ENCODE measurements at regions of chr4 and their contacts with region 1.

Region 1: DNA sequence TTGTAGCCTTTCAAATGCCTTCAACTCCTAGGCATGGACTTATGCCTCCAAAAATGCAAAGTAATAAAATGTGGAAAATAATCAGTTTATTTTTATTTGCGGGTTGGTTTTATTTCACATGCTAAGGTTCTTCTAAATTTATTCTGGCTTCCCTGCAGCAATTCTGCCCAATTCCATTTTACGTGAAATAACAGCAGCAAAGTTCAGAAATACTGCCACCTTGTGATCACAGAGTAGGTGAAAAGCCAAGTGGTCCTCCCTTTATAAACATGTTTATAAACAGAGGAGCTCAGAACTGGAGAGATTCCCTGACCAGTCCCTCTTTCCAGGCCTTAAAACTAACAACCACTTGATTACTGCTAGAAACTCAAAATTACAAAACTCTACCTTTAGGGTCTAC is 14.7 kb upstream of the DCHS2 start:
- DNase-seq: peak; percentile 13
- H3K4me3 ChIP-seq: no peak overlapping the region
- H3K27ac ChIP-seq: no peak overlapping the region
- H3K4me1 ChIP-seq: no peaks in the 10 kb centered on the region
- H3K27me3 ChIP-seq: no peaks in the 10 kb centered on the region
- CTCF ChIP-seq: peak in 3 of 4 experiments; percentile 34 to 57 (median 35)
- POLR2A ChIP-seq: no peak

Region 2: DNA sequence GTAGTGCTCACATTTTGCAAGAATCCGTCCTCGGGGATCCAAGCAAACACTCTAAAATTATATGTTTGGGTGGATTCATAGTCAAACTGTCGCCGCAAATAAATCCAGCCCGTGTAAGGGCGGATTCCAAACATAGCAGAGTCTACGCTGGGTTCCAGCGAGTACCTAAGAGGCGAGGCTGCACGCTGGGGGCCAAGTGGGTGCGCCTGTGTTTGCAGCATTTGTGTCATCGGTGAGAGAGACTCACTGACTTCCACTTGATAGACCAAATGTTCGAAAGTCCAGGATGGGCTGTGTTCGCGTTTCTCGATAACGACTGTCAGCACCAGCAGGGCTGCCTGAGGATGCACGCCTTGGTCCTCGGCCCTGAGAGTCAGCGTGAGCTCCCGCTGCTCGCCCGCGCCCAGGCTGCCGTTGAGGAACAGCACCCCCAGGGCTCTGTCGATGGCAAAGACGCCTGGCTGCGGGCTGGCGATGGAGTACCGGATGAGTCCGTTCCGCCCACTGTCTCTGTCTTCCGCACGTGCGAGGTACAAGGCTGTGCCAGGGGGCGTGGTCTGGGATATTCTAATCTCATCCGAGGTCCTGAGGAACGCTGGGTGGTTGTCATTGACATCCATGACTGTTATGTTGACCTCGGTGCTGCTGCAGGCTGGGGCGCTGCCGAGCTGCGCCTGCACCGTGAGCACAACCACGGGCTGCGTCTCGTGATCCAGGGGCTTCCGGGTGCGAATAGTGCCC is 173.4 kb before region 1 on chr4:
- intact Hi-C with region 1: loop called (anchors 5 kb)
- DNase-seq: no peak
- H3K4me3 ChIP-seq: no peak overlapping the region
- H3K27ac ChIP-seq: no peak overlapping the region
- H3K4me1 ChIP-seq: no peaks in the 10 kb centered on the region
- H3K27me3 ChIP-seq: no peaks in the 10 kb centered on the region
- CTCF ChIP-seq: no peak
- POLR2A ChIP-seq: no peak

Region 3: GRCh38 chr4:154399259-154399974 is 106.8 kb before region 1 on chr4:
- intact Hi-C with region 1: loop called (anchors 2 kb)
- DNase-seq: no peak
- H3K4me3 ChIP-seq: no peak overlapping the region
- H3K27ac ChIP-seq: no peak overlapping the region
- H3K4me1 ChIP-seq: no peaks in the 10 kb centered on the region
- H3K27me3 ChIP-seq: no peaks in the 10 kb centered on the region
- CTCF ChIP-seq: peak in 2 of 4 experiments; percentile 41 to 60
- POLR2A ChIP-seq: no peak

Region 4: DNA sequence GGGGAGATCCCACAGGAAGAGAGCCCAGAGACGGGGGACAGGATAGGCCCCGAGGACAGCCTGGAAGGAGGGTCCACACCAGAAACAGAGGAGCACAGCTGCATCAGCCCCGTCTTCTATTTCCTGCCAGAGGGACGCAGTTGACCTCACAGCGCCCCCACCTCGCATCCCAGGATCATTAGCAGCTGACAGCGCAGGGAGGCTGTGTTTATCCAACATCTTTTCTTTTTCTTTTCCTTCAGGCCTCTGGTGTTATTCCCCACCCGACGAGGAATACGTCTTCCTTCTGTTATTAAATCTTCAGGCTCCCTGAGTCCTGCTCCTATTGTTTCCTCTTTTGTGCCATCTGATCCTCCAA is 90.1 kb before region 1 on chr4:
- intact Hi-C with region 1: loop called (anchors 5 kb)
- DNase-seq: no peak
- H3K4me3 ChIP-seq: peak overlapping the region; percentile 22 to 26
- H3K27ac ChIP-seq: peak overlapping the region; percentile 50
- H3K4me1 ChIP-seq: no peaks in the 10 kb centered on the region
- H3K27me3 ChIP-seq: no peaks in the 10 kb centered on the region
- CTCF ChIP-seq: no peak
- POLR2A ChIP-seq: no peak

Region 5: GRCh38 chr4:154822775-154823174 is 316.5 kb after region 1 on chr4:
- intact Hi-C with region 1: no loop called
- DNase-seq: no peak
- H3K4me3 ChIP-seq: no peak overlapping the region
- H3K27ac ChIP-seq: no peak overlapping the region
- H3K4me1 ChIP-seq: no peaks in the 10 kb centered on the region
- H3K27me3 ChIP-seq: no peaks in the 10 kb centered on the region
- CTCF ChIP-seq: no peak
- POLR2A ChIP-seq: no peak

Measured in prostate gland (tissue), 2 donors.